ENCODE measurements at regions of chr13 and their contacts with region 1.

Region 1: DNA sequence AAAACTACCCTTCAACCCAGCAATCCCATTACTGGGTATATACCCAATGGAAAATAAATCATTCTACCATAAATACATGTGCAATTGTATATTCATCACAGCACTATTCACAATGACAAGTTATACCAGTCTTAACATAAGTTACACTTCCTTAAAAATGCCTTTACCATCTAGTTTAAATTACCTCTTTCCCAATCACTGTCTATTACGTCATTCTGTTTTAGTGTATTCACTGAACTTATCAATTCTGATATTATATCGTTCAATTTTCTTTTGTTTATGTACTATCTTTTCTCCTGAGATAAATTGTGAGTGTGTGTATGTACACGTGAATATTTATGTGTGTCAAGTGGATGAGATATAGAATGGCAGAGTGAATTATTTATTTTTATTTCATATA is 1416.8 kb downstream of the OLFM4 start:
- DNase-seq: no peak
- ATAC-seq: no peak
- H3K4me3 ChIP-seq: no peak overlapping the region
- H3K4me3 Mint-ChIP-seq: no peak overlapping the region
- H3K27ac ChIP-seq: no peak overlapping the region
- H3K27ac Mint-ChIP-seq: no peak overlapping the region
- H3K4me1 ChIP-seq: no peaks in the 10 kb centered on the region
- H3K4me1 Mint-ChIP-seq: no peaks in the 10 kb centered on the region
- H3K27me3 ChIP-seq: no peaks in the 10 kb centered on the region
- H3K27me3 Mint-ChIP-seq: no peaks in the 10 kb centered on the region
- CTCF ChIP-seq: no peak

Region 2: GRCh38 chr13:54317722-54318121 is 127.7 kb before region 1 on chr13:
- CTCF ChIA-PET with region 1: no interaction called
- POLR2A ChIA-PET with region 1: no interaction called
- intact Hi-C with region 1: loop called in 1 of 2 experiments (anchors 5 kb)
- DNase-seq: no peak
- ATAC-seq: no peak
- H3K4me3 ChIP-seq: no peak overlapping the region
- H3K4me3 Mint-ChIP-seq: no peak overlapping the region
- H3K27ac ChIP-seq: no peak overlapping the region
- H3K27ac Mint-ChIP-seq: no peak overlapping the region
- H3K4me1 ChIP-seq: no peaks in the 10 kb centered on the region
- H3K4me1 Mint-ChIP-seq: no peaks in the 10 kb centered on the region
- H3K27me3 ChIP-seq: no peaks in the 10 kb centered on the region
- H3K27me3 Mint-ChIP-seq: no peaks in the 10 kb centered on the region
- CTCF ChIP-seq: no peak

Region 3: GRCh38 chr13:54950546-54950945 is 505.1 kb after region 1 on chr13:
- CTCF ChIA-PET with region 1: no interaction called
- POLR2A ChIA-PET with region 1: no interaction called
- intact Hi-C with region 1: no loop called
- DNase-seq: no peak
- ATAC-seq: no peak
- H3K4me3 ChIP-seq: no peak overlapping the region
- H3K4me3 Mint-ChIP-seq: no peak overlapping the region
- H3K27ac ChIP-seq: no peak overlapping the region
- H3K27ac Mint-ChIP-seq: no peak overlapping the region
- H3K4me1 ChIP-seq: no peaks in the 10 kb centered on the region
- H3K4me1 Mint-ChIP-seq: no peaks in the 10 kb centered on the region
- H3K27me3 ChIP-seq: no peaks in the 10 kb centered on the region
- H3K27me3 Mint-ChIP-seq: no peaks in the 10 kb centered on the region
- CTCF ChIP-seq: no peak

Measured in CD4-positive, alpha-beta T cell (primary cell).